ENCODE measurements at regions of chr6 and their contacts with region 1.

Region 1: GRCh38 chr6:138970856-138971425 is 17.1 kb downstream of the REPS1 start:
- DNase-seq: no peak
- H3K4me3 Mint-ChIP-seq: no peak overlapping the region
- H3K27ac Mint-ChIP-seq: no peak overlapping the region
- H3K4me1 Mint-ChIP-seq: peaks cover 35% of the 10 kb centered on the region
- H3K27me3 Mint-ChIP-seq: no peaks in the 10 kb centered on the region

Region 2: DNA sequence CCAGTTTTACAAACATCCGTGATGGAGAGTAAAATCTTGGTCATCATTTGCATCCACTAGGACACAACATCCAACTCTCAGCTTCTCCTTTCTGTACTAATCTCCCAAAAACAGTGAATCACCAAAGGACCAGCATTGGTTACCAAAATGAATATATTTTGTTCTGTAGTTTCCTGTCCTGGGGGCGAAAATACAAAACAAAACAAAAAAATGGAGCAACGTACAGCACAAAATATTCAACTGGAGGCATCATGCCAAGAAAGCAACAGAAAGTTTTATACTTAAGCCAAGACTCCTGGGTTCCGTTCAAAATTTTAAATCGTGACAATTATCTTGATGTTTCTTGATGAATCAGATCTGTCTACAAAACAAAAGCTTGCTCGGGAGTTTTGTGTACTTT is 323.9 kb before region 1 on chr6:
- CTCF ChIA-PET with region 1: no interaction called
- POLR2A ChIA-PET with region 1: no interaction called
- DNase-seq: no peak
- H3K4me3 Mint-ChIP-seq: no peak overlapping the region
- H3K27ac Mint-ChIP-seq: no peak overlapping the region
- H3K4me1 Mint-ChIP-seq: no peaks in the 10 kb centered on the region
- H3K27me3 Mint-ChIP-seq: no peaks in the 10 kb centered on the region

Region 3: DNA sequence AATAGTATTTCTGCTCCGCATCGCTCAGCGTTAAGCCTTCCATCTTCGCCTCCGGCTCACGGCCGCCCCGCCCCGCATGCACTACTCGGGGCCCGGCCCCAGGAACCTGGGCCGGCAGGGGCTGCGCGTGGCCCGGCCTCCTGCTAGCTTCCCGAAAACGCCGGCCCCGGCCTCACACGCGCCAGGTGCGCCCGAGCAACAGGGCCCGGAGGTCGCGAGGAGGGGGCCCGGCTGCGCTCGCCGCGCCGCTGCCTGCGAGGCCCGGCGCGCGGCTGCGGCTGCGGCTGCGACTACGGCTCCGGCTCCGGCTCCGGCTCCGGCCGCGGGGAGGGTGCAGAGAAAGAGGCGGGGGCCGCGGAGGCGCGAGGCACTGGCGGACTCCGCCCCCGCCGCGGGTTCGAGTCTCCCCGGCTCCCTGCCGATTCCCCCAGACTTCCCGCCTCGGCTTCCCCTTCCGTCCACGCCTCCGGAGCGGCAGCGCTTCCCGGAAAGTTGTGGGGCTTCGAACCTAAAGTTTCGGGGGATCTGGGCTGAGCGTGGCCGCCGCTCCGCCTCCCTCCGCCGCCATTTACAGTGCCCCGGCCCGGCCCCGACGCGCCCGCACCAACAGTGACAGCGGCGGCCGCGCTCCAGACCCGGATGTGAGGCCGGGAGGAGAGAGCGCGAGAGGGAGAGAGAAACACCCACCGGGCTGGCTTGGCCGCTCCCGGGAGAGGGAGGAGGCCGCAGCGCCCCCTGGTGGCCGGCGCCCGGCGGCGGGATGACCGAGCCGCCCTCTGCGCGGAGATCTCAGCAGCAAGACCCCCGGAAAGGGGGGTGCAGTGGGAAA is 16.9 kb after region 1 on chr6 and contains the start of gene REPS1:
- CTCF ChIA-PET with region 1: interaction called, 19 read pairs
- POLR2A ChIA-PET with region 1: no interaction called
- DNase-seq: peak; percentile 92
- H3K4me3 Mint-ChIP-seq: peak within 1 kb of the TSS; percentile 85
- H3K27ac Mint-ChIP-seq: peak within 1 kb of the TSS; percentile 96
- H3K4me1 Mint-ChIP-seq: peaks cover 6% of the 10 kb centered on the region
- H3K27me3 Mint-ChIP-seq: no peaks in the 10 kb centered on the region
- total RNA-seq, gene REPS1: 44.5 to 58.1 TPM

Region 4: DNA sequence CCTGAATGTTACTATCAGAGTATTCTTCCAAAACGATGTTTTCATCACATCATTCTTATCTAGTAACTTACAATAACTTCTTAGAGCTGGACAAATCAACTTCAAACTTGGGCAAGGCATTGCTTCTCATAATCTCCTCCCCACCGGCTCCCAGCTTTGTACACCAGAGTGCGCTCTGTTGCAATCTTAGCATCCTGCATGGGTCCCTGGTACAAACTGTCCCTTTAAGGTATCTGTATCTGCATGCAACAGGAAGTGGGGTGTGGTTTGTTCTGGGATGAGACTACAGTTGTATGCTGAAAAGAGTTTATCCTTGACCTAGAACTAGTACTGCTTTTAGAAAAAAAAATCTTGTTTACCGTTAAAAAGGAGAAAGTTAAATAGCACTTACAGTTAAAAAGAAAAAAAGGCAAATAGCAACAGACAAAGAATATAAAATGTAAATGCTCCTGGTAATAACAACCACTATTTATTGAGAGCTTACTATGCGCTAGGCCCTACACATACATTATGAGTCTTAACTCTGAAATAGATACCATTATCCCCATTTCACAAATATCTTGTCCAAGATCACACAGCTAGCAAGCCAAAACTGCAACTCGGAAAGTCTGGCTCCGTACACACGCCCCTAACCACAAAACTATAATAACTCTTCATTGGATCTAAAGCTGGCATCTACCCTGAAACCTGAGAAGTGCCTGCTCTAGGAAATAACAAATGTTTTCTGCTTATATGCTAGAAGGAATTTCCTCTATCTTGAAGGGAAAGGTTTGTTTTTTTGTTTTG is 154.1 kb after region 1 on chr6:
- CTCF ChIA-PET with region 1: no interaction called
- POLR2A ChIA-PET with region 1: no interaction called
- DNase-seq: peak; percentile 92
- H3K4me3 Mint-ChIP-seq: peak overlapping the region; percentile 51
- H3K27ac Mint-ChIP-seq: peak overlapping the region; percentile 97
- H3K4me1 Mint-ChIP-seq: peaks cover 52% of the 10 kb centered on the region
- H3K27me3 Mint-ChIP-seq: no peaks in the 10 kb centered on the region

Region 5: DNA sequence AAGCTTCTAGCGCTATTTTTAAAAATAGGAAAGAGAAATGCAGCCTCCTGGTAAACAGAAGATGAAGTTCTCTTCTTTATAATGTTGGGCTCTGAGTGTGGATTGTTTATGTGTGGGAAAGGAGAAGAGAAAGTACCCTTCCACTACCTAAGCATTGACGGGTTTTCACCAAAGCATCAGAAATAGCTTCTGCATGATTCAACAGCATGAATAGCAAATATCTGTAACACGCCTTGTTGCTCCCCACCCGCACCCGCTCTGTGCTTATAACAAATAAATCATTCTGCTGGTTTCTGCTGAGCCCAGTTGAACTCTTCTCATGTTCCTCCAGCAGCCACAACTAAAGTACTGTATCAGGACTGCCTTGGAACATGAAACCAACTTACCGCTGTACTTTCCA is 300.1 kb after region 1 on chr6:
- CTCF ChIA-PET with region 1: no interaction called
- POLR2A ChIA-PET with region 1: no interaction called
- DNase-seq: no peak
- H3K4me3 Mint-ChIP-seq: no peak overlapping the region
- H3K27ac Mint-ChIP-seq: no peak overlapping the region
- H3K4me1 Mint-ChIP-seq: no peaks in the 10 kb centered on the region
- H3K27me3 Mint-ChIP-seq: no peaks in the 10 kb centered on the region

Measured in activated CD4-positive, alpha-beta T cell treated with anti-CD3 and anti-CD28 coated beads, Interleukin-2, amount 10 ng/mL, durations not matched to agents 7 days and 5 days (primary cell).